Psoas muscle (tissue), 8 donors: ENCODE measurements at regions of chr1 and their contacts with region 1.

Region 1: GRCh38 chr1:17574516-17574915 is 35.0 kb downstream of the ARHGEF10L start:
- DNase-seq: no peak
- ATAC-seq: no peak
- H3K4me3 ChIP-seq: no peak overlapping the region
- H3K27ac ChIP-seq: no peak overlapping the region
- H3K4me1 ChIP-seq: peaks cover 18% of the 10 kb centered on the region
- H3K27me3 ChIP-seq: no peaks in the 10 kb centered on the region
- CTCF ChIP-seq: peak; percentile 5

Region 2: DNA sequence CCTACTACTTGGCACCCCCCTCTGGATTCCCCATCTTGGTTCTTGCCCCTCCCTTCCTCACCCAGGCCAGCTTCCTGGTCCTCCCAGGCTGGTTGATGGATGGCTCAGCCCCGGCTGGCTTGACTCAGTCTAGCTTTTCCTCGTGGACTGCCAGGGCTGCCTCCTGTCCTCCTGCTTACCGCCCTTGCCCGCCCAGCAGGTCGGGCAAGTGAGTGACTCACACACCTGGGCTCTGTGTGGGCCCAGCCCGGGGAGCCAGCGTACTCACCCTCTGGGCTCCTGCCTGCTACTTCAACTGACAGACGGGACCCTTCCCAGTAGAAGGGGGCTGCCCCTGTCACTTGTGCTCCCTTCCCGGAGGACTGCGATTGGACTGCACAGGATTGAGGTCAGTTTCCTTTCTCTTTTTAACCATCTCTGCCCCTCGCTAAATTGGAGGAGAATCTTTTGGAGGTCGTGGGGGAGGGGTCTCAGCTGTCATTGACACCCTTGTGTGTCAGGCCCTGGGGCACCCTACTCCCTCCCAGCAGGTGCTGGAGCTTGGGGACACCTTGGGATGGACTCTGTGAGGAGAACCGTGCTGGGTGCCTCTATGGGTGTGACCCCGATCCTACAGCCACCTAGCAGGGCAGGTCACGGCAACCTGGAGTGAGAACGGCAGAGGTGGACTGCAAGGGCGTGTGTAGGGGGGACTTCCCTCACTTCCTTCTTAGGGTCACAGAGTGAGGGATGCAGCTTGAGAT is 54.3 kb before region 1 on chr1:
- intact Hi-C with region 1: no loop called
- DNase-seq: no peak
- ATAC-seq: peak in 1 of 4 donors; percentile 20
- H3K4me3 ChIP-seq: no peak overlapping the region
- H3K27ac ChIP-seq: no peak overlapping the region
- H3K4me1 ChIP-seq: no peaks in the 10 kb centered on the region
- H3K27me3 ChIP-seq: peaks cover 0 to 2% (median 0%) of the 10 kb centered on the region in 3 donors
- CTCF ChIP-seq: no peak

Region 3: DNA sequence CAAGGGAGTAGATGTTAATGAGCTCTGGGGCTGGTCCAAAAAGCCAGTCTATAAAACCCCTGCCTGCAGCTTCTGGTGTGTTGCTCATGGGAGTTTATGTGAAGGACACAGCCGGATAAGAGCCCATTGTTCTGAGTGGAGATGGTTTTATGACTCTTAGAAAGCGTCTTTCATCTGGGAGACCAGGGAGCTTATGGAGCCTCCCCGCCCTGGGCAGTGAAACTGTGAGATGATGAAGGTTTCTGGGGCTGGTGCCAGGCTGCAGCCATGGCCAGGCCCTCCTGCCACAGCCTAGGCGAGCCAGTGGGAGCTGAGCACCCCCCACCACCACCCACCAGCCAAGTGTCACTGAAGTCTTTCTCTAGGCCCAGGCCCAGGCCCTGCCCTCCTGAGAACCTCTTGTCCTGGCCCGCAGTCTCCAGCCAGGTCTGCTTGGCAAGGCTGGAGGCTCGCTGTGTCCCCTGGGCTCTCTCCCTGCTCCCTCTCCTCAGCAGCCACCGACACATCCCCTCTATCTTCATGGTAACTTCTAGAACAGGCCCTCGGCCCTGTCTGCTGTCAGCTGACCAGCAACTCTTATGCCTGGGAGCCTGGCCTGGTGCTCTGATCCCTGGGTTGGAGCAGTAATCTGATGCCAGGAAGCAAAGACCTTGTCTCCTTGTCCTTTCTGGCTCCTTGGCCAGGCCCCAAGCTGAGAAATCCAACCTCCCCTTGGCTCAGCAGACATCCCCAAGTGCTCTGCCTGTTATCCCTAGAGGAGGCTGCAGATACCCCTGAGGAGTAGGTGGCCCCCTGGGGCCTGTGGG is 42.6 kb before region 1 on chr1:
- intact Hi-C with region 1: loop called in 1 of 2 experiments (anchors 1 kb)
- DNase-seq: peak; percentile 73 to 87
- ATAC-seq: peak; percentile 89 to 93 (median 92)
- H3K4me3 ChIP-seq: no peak overlapping the region
- H3K27ac ChIP-seq: peak overlapping the region; percentile 73
- H3K4me1 ChIP-seq: peaks cover 11% of the 10 kb centered on the region
- H3K27me3 ChIP-seq: no peaks in the 10 kb centered on the region
- CTCF ChIP-seq: no peak

Region 4: GRCh38 chr1:17635811-17636210 is 61.3 kb after region 1 on chr1:
- intact Hi-C with region 1: no loop called
- DNase-seq: peak in 1 of 2 donors; percentile 37
- ATAC-seq: no peak
- H3K4me3 ChIP-seq: no peak overlapping the region
- H3K27ac ChIP-seq: no peak overlapping the region
- H3K4me1 ChIP-seq: peaks cover 3% of the 10 kb centered on the region
- H3K27me3 ChIP-seq: no peaks in the 10 kb centered on the region
- CTCF ChIP-seq: no peak